ENCODE measurements at regions of chr15 and their contacts with region 1.

Region 1: GRCh38 chr15:22927761-22928160 is 52.4 kb downstream of the CYFIP1 start:
- DNase-seq: no peak
- H3K4me3 ChIP-seq: no peak overlapping the region
- H3K27ac ChIP-seq: no peak overlapping the region
- H3K4me1 ChIP-seq: peaks cover 0 to 13% (median 9%) of the 10 kb centered on the region in 4 donors
- H3K27me3 ChIP-seq: no peaks in the 10 kb centered on the region
- CTCF ChIP-seq: no peak

Region 2: DNA sequence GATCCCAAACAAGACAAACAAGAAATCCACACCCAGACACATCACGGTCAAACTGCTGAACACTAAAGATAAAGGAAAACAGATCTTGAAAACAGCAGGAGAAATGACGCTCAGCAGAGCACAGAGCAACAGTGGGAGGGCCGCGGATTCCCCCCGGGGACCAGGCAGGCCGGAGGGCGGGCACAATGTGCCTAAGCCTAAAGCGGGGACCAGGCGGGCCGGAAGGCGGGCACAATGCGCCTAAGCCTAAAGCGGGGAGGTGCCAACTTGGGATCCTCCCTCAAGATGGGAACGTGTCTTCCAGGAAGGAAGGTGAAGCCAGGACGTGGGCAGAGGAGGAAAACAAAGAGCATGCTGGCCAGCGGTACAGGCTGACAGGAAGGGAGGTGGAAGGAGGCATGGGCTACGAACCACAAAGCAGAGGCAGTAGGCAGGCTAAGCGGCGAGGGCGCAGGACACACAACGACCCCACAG is 21.4 kb after region 1 on chr15:
- intact Hi-C with region 1: no loop called
- DNase-seq: peak; percentile 59 to 87
- H3K4me3 ChIP-seq: peak overlapping the region; percentile 10 to 25
- H3K27ac ChIP-seq: peak overlapping the region; percentile 47 to 77
- H3K4me1 ChIP-seq: peaks cover 0 to 65% (median 49%) of the 10 kb centered on the region in 4 donors
- H3K27me3 ChIP-seq: no peaks in the 10 kb centered on the region
- CTCF ChIP-seq: no peak

Region 3: DNA sequence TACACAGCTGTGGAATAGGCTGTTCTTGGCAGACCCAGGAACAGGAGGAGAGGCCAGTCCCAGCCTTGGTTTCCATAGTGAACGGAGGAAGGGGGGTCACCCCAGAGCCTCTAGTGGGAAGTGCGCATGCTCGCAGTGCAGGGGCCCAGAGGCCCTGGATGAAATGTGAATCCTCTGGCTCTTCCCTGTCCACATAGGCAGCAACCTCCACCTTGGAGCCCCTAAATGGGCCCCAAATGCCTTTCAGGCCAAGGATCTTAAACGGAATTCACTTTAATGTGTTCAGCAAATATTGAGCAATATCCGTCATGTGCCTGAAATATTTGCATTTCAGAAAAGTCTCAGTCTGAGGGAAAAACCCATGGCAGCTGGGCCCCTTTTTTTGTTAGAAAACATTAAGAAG is 762.7 kb after region 1 on chr15:
- intact Hi-C with region 1: loop called (anchors 5 kb)
- DNase-seq: peak; percentile 45 to 69
- H3K4me3 ChIP-seq: no peak overlapping the region
- H3K27ac ChIP-seq: no peak overlapping the region
- H3K4me1 ChIP-seq: peaks cover 0 to 4% (median 0%) of the 10 kb centered on the region in 4 donors
- H3K27me3 ChIP-seq: no peaks in the 10 kb centered on the region
- CTCF ChIP-seq: no peak